Gastrocnemius medialis (tissue), 4 donors: ENCODE measurements at regions of chr6 and their contacts with region 1.

Region 1: DNA sequence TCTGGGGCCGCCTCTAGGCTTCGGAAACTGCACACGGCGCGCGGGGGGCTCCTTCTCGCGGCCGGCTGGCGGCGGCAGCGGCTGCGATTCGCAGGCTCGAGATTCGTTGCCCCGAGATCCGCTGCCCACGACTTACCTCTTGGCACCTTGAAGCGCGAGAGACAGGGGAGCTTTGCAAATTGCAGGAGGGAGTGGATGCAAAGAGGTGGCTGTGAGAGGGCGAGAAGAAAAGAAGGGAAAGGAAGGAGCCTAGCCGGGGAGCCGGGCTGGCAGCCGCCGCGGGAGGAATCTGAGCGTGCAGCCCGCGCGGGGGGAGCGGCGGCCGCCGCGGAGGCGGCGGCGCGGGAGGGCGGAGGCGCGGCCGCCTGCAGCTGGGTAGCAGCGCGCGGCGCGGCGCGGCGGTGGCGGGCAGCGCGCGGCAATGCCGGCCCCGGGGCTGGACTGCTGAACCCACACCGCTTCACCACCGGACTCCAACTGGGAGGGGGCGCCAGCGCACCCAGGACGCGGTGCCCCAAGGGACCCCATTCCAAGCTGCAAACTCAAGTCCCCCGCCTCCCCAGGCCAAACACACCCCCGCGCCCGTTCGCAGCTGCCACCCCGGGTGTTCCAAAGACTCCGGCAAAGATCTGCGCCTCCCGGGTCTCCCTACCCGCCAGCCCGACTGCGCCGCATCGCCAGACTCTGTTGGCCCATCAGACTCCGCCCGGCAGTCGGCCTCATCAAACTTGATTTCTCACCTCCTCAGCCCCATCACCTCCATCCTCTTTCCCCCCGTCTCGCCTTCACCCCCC is 44.2 kb upstream of the SUPT3H start:
- DNase-seq: peak; percentile 19 to 34
- ATAC-seq: peak; percentile 62 to 64
- H3K4me3 ChIP-seq: peak overlapping the region; percentile 61 to 75 (median 64)
- H3K27ac ChIP-seq: peak overlapping the region; percentile 12 to 60 (median 42)
- H3K4me1 ChIP-seq: peaks cover 16 to 32% of the 10 kb centered on the region in 2 donors
- H3K27me3 ChIP-seq: peaks cover 42 to 64% (median 60%) of the 10 kb centered on the region in 3 donors
- CTCF ChIP-seq: peak in 4 of 5 experiments; percentile 8 to 34 (median 10)
- POLR2A ChIP-seq: no peak

Region 2: GRCh38 chr6:44655412-44656342 is 766.2 kb before region 1 on chr6:
- in situ Hi-C with region 1: loop called in 3 of 4 experiments (anchors 25 kb)
- intact Hi-C with region 1: loop called (anchors 2 kb)
- DNase-seq: peak; percentile 83 to 91
- ATAC-seq: peak; percentile 90 to 92
- H3K4me3 ChIP-seq: no peak overlapping the region
- H3K27ac ChIP-seq: peak overlapping the region in 1 of 4 donors; percentile 39
- H3K4me1 ChIP-seq: peaks cover 9 to 14% of the 10 kb centered on the region in 2 donors
- H3K27me3 ChIP-seq: no peaks in the 10 kb centered on the region
- CTCF ChIP-seq: peak; percentile 82 to 95 (median 92)
- POLR2A ChIP-seq: no peak

Region 3: GRCh38 chr6:45377554-45378333 is 44.2 kb before region 1 on chr6 and contains the start of gene SUPT3H:
- in situ Hi-C with region 1: no loop called
- intact Hi-C with region 1: loop called (anchors 2 kb)
- DNase-seq: peak; percentile 74 to 86
- ATAC-seq: peak; percentile 85 to 90
- H3K4me3 ChIP-seq: peak within 1 kb of the TSS; percentile 93 to 95 (median 94)
- H3K27ac ChIP-seq: peak within 1 kb of the TSS; percentile 97 to 99 (median 98)
- H3K4me1 ChIP-seq: peaks cover 12 to 16% of the 10 kb centered on the region in 2 donors
- H3K27me3 ChIP-seq: no peaks in the 10 kb centered on the region
- CTCF ChIP-seq: peak in 3 of 5 experiments; percentile 17 to 36 (median 30)
- POLR2A ChIP-seq: peak; percentile 76 to 79
- total RNA-seq, gene SUPT3H: 1.5 to 9.0 (median 4.2) TPM

Region 4: GRCh38 chr6:45495429-45496084 is 73.7 kb after region 1 on chr6:
- in situ Hi-C with region 1: no loop called
- intact Hi-C with region 1: no loop called
- DNase-seq: no peak
- ATAC-seq: no peak
- H3K4me3 ChIP-seq: no peak overlapping the region
- H3K27ac ChIP-seq: no peak overlapping the region
- H3K4me1 ChIP-seq: no peaks in the 10 kb centered on the region
- H3K27me3 ChIP-seq: no peaks in the 10 kb centered on the region
- CTCF ChIP-seq: no peak
- POLR2A ChIP-seq: no peak

Region 5: GRCh38 chr6:45714741-45715507 is 293.0 kb after region 1 on chr6:
- in situ Hi-C with region 1: loop called in 3 of 4 experiments (anchors 5 to 25 kb)
- intact Hi-C with region 1: loop called (anchors 2 kb)
- DNase-seq: peak; percentile 16 to 43
- ATAC-seq: peak; percentile 95 to 96
- H3K4me3 ChIP-seq: no peak overlapping the region
- H3K27ac ChIP-seq: no peak overlapping the region
- H3K4me1 ChIP-seq: peaks cover 0 to 7% of the 10 kb centered on the region in 2 donors
- H3K27me3 ChIP-seq: no peaks in the 10 kb centered on the region
- CTCF ChIP-seq: peak; percentile 60 to 84 (median 70)
- POLR2A ChIP-seq: no peak

Region 6: DNA sequence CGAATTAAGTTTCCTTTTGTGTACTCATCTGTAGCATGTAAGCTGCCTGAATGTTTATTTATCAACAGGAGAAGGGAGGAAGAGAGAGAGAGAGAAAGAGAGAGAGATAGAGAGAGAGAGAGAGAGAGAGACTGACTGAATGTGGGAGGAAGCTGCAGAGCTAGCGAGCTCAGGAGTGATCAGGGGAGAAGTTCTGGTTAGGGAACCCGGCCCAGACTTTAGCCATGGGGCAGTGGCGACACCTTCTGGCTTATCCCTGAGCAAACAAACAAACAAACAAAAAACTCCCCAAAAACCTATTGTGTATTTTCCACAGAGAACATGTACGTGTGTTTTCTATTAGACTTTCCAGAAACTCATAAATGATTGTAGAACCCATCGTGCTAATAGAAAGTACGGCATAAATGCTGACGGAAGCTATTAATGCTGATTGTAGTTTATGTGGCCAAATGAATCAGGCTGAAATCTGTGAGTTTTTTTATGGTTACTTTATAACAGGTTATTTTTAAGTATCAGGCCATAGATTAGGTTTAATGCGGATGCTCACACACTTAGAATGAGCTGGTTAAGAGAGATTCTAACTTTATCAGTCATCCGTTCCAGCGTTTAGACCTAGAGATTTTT is 500.9 kb after region 1 on chr6:
- in situ Hi-C with region 1: no loop called
- intact Hi-C with region 1: loop called (anchors 5 kb)
- DNase-seq: peak; percentile 52 to 58
- ATAC-seq: peak; percentile 62 to 74
- H3K4me3 ChIP-seq: no peak overlapping the region
- H3K27ac ChIP-seq: peak overlapping the region in 2 of 4 donors; percentile 7 to 29
- H3K4me1 ChIP-seq: peaks cover 12 to 24% of the 10 kb centered on the region in 2 donors
- H3K27me3 ChIP-seq: no peaks in the 10 kb centered on the region
- CTCF ChIP-seq: peak; percentile 49 to 66 (median 57)
- POLR2A ChIP-seq: no peak

Region 7: DNA sequence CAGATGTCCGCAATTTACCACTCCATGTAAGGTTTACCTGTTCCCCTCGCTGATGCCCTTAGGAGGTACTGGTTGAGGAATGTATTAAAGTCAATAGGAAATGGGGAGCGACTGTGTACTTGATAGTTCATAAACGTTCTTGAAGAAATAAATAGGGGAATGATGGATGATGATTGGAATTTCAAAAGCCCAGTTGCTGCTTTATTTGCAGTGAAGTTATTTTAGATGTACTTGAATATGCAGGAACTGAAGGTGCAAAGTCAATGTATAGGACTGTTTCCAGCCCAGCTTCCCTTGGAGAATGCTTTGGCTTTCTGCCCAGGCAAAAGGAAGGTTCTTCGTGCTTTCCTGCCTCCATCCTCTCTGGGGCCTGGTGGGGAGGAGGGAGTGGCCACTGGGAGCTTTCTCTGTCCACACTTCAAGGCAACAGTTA is 1480.0 kb after region 1 on chr6:
- in situ Hi-C with region 1: no loop called
- intact Hi-C with region 1: no loop called
- DNase-seq: no peak
- ATAC-seq: no peak
- H3K4me3 ChIP-seq: no peak overlapping the region
- H3K27ac ChIP-seq: peak overlapping the region; percentile 31 to 61 (median 53)
- H3K4me1 ChIP-seq: peaks cover 0 to 18% of the 10 kb centered on the region in 2 donors
- H3K27me3 ChIP-seq: no peaks in the 10 kb centered on the region
- CTCF ChIP-seq: no peak
- POLR2A ChIP-seq: no peak